Endothelial cell of umbilical vein (primary cell): ENCODE measurements at regions of chr3 and their contacts with region 1.

Region 1: DNA sequence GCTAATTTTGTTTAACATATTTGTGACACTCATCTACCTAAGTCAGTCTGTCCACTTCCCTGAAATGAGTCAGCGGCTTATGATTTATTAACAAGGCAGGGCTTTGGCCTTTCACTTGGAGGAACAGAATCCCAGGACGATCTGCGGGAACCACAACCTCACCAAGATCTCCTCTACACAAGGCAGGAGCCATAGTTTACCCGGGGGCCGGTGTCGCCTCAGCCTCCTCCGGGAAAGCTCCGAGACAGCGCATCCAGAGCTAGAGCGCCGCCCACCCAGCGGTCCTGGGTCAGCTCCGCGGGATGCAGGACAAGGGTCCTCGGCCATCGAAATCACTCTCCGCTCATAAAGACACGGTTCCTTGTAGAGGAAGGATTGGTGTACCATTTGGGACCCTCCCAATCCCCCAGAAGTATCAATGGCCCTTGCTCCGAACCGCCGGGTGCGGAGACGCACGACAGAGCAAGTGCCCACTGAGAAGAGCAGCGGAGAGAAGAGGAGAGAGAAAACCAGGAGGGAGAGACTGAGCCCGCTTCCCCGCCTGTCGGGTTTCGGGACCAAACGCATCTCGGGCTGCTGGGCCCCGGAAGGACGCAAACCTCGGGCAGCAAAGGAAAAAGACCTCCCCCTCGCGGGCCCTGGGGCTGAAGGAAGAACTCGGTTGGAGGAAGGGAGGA is 13.1 kb upstream of the ALCAM start:
- DNase-seq: peak; percentile 35
- H3K4me3 ChIP-seq: peak overlapping the region; percentile 21 to 43 (median 32)
- H3K27ac ChIP-seq: peak overlapping the region; percentile 78
- H3K4me1 ChIP-seq: peaks cover 46% of the 10 kb centered on the region
- H3K27me3 ChIP-seq: no peaks in the 10 kb centered on the region
- CTCF ChIP-seq: no peak
- POLR2A ChIP-seq: no peak

Region 2: DNA sequence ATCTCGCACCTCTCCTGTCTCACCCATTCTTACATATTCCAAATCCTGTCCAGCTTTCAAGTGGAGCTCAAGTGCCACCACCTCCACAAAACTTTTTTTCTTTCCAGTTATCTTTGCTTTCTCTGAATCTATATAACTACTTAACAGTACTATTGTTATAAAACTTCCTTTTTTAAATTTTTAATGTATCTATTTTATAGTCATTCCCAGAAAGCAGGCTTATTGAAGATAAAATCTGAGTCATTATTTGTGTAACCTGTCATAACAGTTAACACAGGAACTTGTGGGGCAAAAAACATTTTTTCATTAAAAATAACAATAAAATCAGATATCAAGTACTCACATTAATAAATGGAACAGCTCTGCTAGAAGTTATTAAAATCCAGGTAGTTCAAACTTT is 60.2 kb before region 1 on chr3:
- CTCF ChIA-PET with region 1: no interaction called
- POLR2A ChIA-PET with region 1: no interaction called
- dilution Hi-C with region 1: no loop called
- intact Hi-C with region 1: loop called (anchors 5 kb)
- DNase-seq: peak; percentile 63
- H3K4me3 ChIP-seq: no peak overlapping the region
- H3K27ac ChIP-seq: peak overlapping the region; percentile 29
- H3K4me1 ChIP-seq: peaks cover 13% of the 10 kb centered on the region
- H3K27me3 ChIP-seq: no peaks in the 10 kb centered on the region
- CTCF ChIP-seq: no peak
- POLR2A ChIP-seq: no peak